ENCODE measurements at regions of chr1 and their contacts with region 1.

Region 1: DNA sequence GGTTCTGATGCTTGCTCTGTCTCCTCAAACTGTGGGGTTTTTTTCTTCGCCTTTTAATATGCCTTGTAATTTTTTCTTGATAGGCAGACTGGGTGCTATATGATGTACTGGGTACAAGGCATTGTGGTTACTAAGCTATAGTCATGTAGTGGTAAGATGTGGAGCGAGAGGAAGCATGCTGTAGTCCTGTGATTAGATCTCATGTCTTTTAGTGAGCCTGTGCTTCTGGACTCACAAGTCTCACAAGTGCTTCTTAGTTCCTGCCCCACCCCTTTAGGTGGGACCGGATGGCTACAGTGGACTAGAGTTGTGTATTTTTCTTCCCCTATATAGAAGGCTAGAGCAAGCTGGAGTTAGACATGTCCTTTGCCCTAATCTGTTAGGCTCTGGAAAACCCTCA is 178.7 kb downstream of the DNM3 start:
- DNase-seq: no peak
- ATAC-seq: no peak

Region 2: GRCh38 chr1:172071746-172072145 is 51.8 kb after region 1 on chr1:
- intact Hi-C with region 1: loop called (anchors 2 kb)
- DNase-seq: no peak
- ATAC-seq: no peak